ENCODE measurements at regions of chr20 and their contacts with region 1.

Region 1: DNA sequence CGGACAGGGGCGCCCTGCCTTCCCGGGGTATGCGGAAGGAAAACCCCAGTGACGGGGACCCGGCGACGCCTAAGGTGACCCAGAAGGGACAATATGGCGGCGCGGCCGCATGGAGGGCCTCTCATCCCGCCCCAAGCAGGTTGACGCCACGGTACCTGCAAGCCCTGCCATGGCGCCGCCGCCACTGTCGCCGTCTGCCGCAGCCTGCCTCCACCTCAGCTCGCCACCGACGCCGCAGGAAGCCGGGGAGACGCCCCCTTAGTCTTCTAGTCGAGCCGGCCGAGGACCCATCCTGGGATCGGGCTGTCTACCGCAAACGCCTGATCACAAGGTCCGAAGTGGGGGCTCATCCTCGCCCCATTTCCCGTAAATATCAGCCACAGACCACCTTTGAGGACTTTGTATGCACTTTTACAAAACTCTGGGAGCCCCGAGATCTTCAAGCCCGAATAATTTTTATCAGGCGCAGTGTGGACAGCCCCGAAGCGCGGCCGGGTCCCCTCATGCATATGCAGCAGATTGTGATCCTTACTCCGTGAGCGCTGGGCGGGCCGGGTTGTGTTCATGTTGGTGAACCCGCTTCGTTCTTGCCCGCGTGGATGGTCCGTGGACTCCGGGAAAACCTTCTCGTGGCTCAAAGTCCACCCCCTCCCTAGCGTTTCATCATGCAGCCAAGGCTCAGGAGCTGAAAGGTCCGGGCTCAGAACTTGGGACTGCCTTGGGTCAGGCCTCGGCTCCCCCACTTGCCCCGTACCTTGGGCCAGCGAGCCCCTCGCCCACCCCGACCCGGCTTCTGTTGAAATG is at the start of gene BLCAP:
- DNase-seq: peak; percentile 90 to 95 (median 93)
- H3K4me3 ChIP-seq: peak within 1 kb of the TSS; percentile 83 to 96 (median 94)
- H3K27ac ChIP-seq: peak within 1 kb of the TSS; percentile 79 to 98 (median 96)
- H3K4me1 ChIP-seq: peaks cover 10 to 36% of the 10 kb centered on the region in 2 donors
- H3K27me3 ChIP-seq: no peaks in the 10 kb centered on the region
- CTCF ChIP-seq: no peak
- POLR2A ChIP-seq: peak; percentile 92 to 93
- total RNA-seq, gene BLCAP: 50.2 to 80.1 (median 67.0) TPM

Region 2: DNA sequence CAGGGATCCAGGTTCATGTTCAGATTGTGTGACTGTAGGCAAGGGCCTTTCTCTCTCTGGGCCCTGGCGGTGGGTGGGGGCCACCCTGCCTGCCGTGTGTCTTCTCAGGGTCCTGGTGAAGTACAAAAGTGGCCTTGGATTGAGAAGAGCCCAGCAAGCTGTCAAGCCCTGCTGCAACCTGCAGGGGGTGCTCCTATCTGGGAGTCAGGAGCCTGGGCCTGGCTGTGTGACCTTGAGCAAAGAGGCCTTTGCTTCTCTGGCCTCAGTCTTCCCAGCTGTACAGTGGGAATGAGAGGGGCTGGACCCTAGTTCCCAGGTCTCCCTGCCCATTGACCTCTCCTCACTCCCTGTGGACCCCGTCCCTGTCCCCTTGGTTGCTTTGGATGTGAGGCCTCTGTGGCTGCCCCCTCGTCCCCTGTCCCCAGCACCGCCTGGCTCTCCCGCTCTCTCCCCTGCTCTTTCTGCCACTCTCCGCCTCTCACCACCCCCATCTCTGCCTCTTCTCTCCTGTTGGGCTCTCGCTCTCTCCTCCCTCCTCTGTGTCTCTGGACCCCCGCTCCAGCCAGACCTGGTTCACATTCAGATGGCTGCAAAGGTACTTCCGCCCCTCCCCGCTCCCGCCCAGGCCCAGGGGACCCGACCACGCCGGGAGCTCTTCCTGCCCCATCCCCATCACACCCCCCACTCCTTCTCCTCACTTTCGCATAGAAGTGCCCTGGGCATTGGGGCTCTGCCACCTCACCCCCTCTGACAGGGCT is 135.2 kb before region 1 on chr20:
- intact Hi-C with region 1: loop called in 1 of 2 experiments (anchors 2 kb)
- DNase-seq: no peak
- H3K4me3 ChIP-seq: no peak overlapping the region
- H3K27ac ChIP-seq: peak overlapping the region in 1 of 5 donors; percentile 3
- H3K4me1 ChIP-seq: peaks cover 6 to 7% of the 10 kb centered on the region in 2 donors
- H3K27me3 ChIP-seq: no peaks in the 10 kb centered on the region
- CTCF ChIP-seq: peak in 5 of 6 experiments; percentile 11 to 27 (median 16)
- POLR2A ChIP-seq: no peak

Region 3: DNA sequence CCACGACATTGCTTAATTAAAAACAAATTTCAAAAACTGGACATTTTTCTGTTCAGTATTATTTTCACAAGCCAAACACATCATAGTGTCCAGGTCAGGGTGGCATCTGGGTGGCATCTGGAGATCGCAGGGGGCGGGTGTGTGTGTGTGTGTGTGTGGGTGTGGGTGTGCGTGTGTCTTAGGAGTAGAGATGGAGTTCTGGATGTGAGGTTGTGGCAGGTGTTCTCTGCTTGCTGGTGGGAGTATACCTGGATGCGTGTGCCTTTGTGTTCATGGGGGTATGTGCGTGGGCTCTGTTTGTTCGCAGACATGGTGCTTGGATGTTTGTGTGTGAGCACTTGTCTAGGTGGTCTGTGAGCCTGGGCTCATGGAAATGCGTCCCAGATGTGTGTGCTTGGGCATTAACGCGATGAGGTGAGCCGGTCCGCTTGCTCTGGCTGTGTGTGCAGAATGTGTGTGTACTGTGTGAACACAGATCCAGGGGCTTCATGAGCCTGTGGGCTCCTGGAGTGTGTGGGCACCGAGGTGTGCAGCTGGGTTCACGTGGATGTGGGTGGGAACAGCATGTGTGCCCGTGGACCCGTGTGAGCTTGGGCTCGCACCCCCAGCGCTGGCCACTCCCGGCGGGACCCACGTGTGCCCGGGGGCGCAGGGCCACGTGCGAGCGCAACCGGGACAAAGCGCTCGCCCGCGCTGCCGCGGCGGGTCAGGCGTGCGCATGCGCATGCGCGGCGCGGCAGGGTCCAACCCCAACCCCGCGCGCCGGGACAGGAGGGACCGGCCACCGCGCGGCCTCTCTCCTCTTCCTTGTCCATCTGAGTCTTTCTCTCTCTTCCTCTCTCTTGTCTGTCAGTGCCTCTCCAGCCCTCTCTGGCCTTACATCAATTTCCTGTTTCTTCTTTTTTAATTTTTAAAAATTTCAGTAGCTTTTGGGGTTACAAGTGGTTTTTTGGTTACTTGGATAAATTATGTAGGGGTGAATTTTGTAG is 121.5 kb before region 1 on chr20:
- intact Hi-C with region 1: loop called (anchors 5 to 10 kb)
- DNase-seq: peak in 2 of 7 donors; percentile 41 to 49
- H3K4me3 ChIP-seq: peak overlapping the region in 1 of 4 donors; percentile 54
- H3K27ac ChIP-seq: no peak overlapping the region
- H3K4me1 ChIP-seq: peaks cover 7 to 13% of the 10 kb centered on the region in 2 donors
- H3K27me3 ChIP-seq: no peaks in the 10 kb centered on the region
- CTCF ChIP-seq: peak in 1 of 6 experiments; percentile 12
- POLR2A ChIP-seq: no peak